Activated CD8-positive, alpha-beta T cell treated with anti-CD3 and anti-CD28 coated beads, Interleukin-2, amount 10 ng/mL, durations not matched to agents 7 days and 5 days (primary cell): ENCODE measurements at regions of chr6 and their contacts with region 1.

Region 1: DNA sequence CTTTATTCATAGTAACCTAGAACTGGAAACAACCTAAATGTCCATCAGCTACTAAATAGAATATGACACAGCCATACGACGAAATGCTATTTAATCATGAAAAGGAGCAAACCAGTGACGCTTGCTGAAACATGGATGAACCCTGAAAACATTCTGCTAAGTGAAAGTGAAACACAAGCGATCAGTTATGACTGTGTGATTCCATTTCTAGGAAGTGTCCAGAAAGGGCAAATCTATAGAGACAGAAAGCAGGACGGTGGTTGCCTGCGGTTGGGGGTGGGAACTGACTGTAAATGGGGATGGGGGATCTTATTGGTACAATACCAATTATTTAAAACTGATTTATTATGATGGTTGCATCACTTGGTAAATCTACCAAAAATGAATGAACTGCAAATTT is 126.8 kb downstream of the IPCEF1 start:
- DNase-seq: peak; percentile 66
- ATAC-seq: peak; percentile 81
- H3K4me3 Mint-ChIP-seq: peak overlapping the region; percentile 76
- H3K27ac Mint-ChIP-seq: peak overlapping the region; percentile 92
- H3K4me1 Mint-ChIP-seq: peaks cover 64% of the 10 kb centered on the region
- H3K27me3 Mint-ChIP-seq: no peaks in the 10 kb centered on the region

Region 2: DNA sequence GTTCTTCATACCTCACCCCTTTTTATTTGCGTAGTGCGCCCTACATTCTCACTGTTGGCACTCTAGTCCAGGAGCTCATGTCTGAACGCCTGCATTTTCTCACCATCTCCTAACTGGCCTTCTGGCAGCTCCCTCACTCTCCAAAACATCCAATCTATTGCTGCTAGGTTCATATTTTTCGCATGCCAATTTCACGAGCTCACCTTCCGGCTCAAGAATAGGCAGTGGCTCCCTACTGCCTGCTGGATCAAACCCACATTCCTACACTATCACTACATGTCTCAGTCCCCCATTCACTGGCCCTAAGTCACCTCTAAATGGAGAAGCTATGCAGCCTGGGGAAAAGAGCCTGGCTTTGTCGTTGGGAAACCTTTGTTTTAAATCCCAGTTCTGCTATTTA is 11.8 kb after region 1 on chr6:
- CTCF ChIA-PET with region 1: interaction called, 38 read pairs
- POLR2A ChIA-PET with region 1: interaction called, 25 read pairs
- DNase-seq: no peak
- ATAC-seq: no peak
- H3K4me3 Mint-ChIP-seq: no peak overlapping the region
- H3K27ac Mint-ChIP-seq: peak overlapping the region; percentile 55
- H3K4me1 Mint-ChIP-seq: peaks cover 65% of the 10 kb centered on the region
- H3K27me3 Mint-ChIP-seq: no peaks in the 10 kb centered on the region

Region 3: DNA sequence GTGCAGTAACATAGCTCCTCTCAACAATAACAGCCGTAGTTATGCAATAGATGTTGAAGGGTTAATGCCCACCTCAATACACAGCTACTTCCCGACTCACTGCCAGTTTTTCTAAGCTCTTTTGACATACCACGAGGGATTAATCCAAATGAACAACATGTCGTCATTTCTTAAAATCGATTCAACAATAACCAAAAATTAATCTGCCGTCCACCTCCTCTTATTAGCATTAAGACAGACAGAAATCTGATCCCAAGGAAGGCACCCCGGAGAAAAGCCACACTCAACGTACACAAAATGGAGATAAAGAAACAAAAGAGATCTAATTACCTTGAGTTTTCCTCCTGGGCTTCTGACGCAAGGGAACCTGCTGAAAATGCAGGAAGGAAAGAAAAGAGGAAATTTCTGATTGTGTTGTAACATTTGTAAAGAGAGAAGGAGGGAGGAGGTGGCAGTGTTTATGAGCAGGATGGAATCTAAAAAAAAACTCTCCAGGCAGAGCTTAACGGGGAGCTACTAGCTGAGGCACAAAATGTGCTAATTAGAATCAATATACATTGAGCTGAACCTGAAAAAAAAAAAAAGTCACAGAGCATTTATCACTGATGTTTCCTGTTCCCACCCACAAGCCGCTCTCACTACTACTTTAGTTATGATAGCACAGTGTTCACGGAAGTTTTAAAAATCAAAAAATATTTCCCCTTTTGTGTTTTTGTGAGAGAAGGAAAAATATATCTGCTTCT is 17.5 kb after region 1 on chr6:
- CTCF ChIA-PET with region 1: interaction called, 38 read pairs
- POLR2A ChIA-PET with region 1: interaction called, 25 read pairs
- DNase-seq: peak; percentile 62
- ATAC-seq: peak; percentile 62
- H3K4me3 Mint-ChIP-seq: peak overlapping the region; percentile 85
- H3K27ac Mint-ChIP-seq: peak overlapping the region; percentile 90
- H3K4me1 Mint-ChIP-seq: peaks cover 82% of the 10 kb centered on the region
- H3K27me3 Mint-ChIP-seq: no peaks in the 10 kb centered on the region

Region 4: GRCh38 chr6:154292890-154293398 is 63.2 kb after region 1 on chr6:
- CTCF ChIA-PET with region 1: no interaction called
- POLR2A ChIA-PET with region 1: no interaction called
- DNase-seq: no peak
- ATAC-seq: no peak
- H3K4me3 Mint-ChIP-seq: no peak overlapping the region
- H3K27ac Mint-ChIP-seq: no peak overlapping the region
- H3K4me1 Mint-ChIP-seq: no peaks in the 10 kb centered on the region
- H3K27me3 Mint-ChIP-seq: no peaks in the 10 kb centered on the region